PC-9 (cell line): ENCODE measurements at regions of chr3 and their contacts with region 1.

Region 1: DNA sequence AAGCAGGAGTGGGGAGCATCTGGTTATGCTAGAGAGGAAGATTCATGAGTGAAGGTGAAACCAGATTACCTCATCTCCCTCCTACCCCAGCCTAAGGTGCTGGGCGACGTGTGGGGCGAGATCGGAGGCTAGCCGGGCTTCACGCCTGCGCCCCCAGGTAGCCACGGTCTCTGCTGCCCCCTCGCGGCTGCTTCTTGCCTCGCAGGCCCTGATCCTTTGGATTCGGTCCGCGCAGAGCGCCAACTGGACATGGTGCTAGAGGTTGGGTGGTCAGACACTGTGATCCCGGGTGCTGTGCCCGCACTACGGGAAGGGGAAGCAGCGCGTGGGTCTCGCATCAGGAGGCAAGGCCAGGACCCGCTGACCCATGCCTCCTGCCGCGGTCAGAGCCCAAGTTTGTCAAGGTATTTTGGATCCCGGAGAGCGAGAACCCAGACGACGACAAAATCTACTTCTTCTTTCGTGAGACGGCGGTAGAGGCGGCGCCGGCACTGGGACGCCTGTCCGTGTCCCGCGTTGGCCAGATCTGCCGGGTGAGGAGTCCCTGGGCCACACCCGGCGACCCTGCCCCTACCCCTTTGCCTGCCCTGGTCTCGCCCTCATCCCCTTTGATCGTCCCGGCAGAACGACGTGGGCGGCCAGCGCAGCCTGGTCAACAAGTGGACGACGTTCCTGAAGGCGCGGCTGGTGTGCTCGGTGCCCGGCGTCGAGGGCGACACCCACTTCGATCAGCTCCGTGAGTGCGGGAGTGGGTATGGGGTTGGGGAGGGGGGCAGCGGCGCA is 4.2 kb downstream of the SEMA3B start:
- DNase-seq: peak; percentile 61 to 85
- H3K4me3 ChIP-seq: no peak overlapping the region
- H3K27ac ChIP-seq: no peak overlapping the region
- H3K4me1 ChIP-seq: peaks cover 44% of the 10 kb centered on the region
- H3K27me3 ChIP-seq: no peaks in the 10 kb centered on the region
- CTCF ChIP-seq: peak; percentile 91

Region 2: GRCh38 chr3:49500732-49501609 is 772.1 kb before region 1 on chr3:
- CTCF ChIA-PET with region 1: no interaction called
- POLR2A ChIA-PET with region 1: no interaction called
- intact Hi-C with region 1: no loop called
- DNase-seq: peak; percentile 46 to 65
- H3K4me3 ChIP-seq: no peak overlapping the region
- H3K27ac ChIP-seq: peak overlapping the region; percentile 27; the same call in 1 of the 2 replicates
- H3K4me1 ChIP-seq: no peaks in the 10 kb centered on the region
- H3K27me3 ChIP-seq: no peaks in the 10 kb centered on the region
- CTCF ChIP-seq: no peak

Region 3: DNA sequence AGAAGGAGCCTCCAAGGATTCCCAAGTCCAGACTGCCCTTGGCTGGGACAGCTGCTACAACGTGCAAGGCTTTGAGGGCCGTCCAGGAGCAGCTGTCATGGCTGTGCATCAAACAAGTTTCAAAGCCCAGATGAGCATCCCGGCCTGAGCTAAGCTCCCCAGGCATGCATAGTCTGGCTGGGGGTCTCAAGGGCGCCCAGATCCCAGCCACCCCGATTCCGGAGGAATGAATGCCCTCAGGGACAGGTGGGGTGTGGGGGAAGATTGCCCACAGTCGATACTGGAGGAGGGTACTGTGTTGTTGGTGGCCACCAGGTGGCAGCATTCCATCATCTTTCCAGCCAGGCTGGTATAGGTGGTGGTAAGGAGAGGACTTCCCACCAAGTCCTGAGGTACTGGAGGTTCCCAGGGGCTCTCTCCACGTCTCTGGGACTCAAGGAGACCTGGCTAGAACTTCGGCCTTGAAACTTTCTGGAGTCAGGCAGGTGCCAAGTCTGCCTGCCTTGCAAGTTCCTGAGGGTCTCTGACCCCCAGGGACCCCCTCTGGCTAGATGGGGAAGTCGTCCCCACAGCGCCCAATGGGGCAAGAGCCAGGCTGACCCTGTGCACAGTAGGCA is 151.6 kb before region 1 on chr3:
- CTCF ChIA-PET with region 1: no interaction called
- POLR2A ChIA-PET with region 1: no interaction called
- intact Hi-C with region 1: loop called (anchors 5 kb)
- DNase-seq: peak; percentile 63 to 76
- H3K4me3 ChIP-seq: no peak overlapping the region
- H3K27ac ChIP-seq: no peak overlapping the region
- H3K4me1 ChIP-seq: 0 out of 2 replicates have a peak, but pooled peaks cover 4% of the 10 kb centered on the region
- H3K27me3 ChIP-seq: no peaks in the 10 kb centered on the region
- CTCF ChIP-seq: peak; percentile 87

Region 4: DNA sequence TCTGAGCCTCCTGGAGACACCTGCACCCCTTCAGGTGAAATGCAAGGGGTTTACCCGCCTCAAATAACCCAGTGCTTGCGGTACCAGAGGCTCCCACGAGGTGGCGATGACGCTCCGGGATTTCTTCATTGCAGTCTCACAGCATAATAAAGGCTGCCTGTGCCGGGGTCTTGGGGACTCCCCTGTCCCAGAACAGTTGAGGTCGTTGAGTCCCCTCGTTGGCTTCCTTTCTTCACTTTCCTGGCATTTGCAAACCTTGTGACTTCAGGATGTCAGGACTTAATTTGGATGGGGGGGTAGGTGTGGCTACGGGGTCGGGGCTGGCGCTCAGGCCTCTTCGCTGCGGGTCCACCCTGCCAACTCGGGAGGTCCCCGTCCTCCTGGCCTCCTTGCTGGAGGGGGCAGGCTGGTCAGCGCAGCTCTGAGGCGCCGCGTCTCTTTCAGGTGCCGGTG is 80.4 kb before region 1 on chr3:
- CTCF ChIA-PET with region 1: interaction called, 3 read pairs
- POLR2A ChIA-PET with region 1: interaction called, 4 read pairs
- intact Hi-C with region 1: loop called (anchors 1 kb)
- DNase-seq: peak; percentile 47 to 78
- H3K4me3 ChIP-seq: no peak overlapping the region
- H3K27ac ChIP-seq: no peak overlapping the region
- H3K4me1 ChIP-seq: 0 out of 2 replicates have a peak, but pooled peaks cover 7% of the 10 kb centered on the region
- H3K27me3 ChIP-seq: no peaks in the 10 kb centered on the region
- CTCF ChIP-seq: peak; percentile 91

Region 5: GRCh38 chr3:50298836-50299637 is 25.9 kb after region 1 on chr3 and contains the starts of genes HYAL3 and NAA80:
- CTCF ChIA-PET with region 1: interaction called, 4 read pairs
- POLR2A ChIA-PET with region 1: interaction called, 12 read pairs
- intact Hi-C with region 1: no loop called
- DNase-seq: peak; percentile 94 to 99
- H3K4me3 ChIP-seq: peak within 1 kb of the TSS; percentile 95
- H3K27ac ChIP-seq: peak within 1 kb of the TSS; percentile 76
- H3K4me1 ChIP-seq: peaks cover 20% of the 10 kb centered on the region
- H3K27me3 ChIP-seq: no peaks in the 10 kb centered on the region
- CTCF ChIP-seq: no peak
- total RNA-seq, gene HYAL3: 10.2 and 12.2 TPM in 2 replicates
- total RNA-seq, gene NAA80: 25.2 and 25.7 TPM in 2 replicates

Region 6: DNA sequence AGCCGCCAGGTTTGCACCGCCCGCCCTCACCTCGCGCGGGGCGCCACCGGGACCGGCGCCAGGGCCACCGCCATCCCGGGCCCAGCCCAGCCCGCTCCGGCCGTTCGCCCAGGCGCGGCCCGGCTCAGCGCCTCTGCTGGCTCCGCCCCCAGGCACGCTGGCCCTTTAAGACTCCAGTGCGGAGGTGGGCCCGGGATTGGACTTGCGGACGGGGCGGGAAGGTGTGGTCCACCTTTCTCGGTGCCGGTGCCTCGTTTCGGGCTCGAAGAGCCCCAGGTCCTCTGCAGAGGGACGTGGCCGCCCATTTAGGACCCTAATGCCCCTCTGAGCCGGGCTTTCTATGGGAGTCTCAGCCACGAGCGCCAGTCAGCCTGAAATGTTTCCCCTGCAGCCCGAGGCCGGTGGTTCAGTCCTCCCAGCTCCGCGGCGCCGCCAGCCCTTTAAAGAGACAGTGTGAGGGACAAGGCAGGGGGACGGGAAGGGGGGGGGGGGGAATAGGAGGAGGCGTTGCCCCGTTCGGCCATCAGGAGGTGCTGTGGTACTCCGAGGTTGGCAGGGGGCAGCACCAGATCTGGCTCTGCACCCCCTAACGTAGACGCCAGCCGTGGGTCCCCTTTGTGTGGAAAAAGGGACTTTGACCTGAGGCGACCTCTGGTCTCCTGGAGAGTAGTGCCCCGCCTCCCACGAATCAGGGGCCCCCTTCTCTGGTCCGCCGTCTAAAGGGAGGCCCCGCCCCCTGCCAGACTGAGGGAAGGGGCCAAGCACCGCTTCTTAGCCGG is 48.4 kb after region 1 on chr3:
- CTCF ChIA-PET with region 1: interaction called, 7 read pairs
- POLR2A ChIA-PET with region 1: interaction called, 5 read pairs
- intact Hi-C with region 1: loop called (anchors 1 kb)
- DNase-seq: peak; percentile 69 to 89
- H3K4me3 ChIP-seq: peak overlapping the region; percentile 69
- H3K27ac ChIP-seq: peak overlapping the region; percentile 83
- H3K4me1 ChIP-seq: peaks cover 31% of the 10 kb centered on the region
- H3K27me3 ChIP-seq: no peaks in the 10 kb centered on the region
- CTCF ChIP-seq: peak; percentile 62

Region 7: DNA sequence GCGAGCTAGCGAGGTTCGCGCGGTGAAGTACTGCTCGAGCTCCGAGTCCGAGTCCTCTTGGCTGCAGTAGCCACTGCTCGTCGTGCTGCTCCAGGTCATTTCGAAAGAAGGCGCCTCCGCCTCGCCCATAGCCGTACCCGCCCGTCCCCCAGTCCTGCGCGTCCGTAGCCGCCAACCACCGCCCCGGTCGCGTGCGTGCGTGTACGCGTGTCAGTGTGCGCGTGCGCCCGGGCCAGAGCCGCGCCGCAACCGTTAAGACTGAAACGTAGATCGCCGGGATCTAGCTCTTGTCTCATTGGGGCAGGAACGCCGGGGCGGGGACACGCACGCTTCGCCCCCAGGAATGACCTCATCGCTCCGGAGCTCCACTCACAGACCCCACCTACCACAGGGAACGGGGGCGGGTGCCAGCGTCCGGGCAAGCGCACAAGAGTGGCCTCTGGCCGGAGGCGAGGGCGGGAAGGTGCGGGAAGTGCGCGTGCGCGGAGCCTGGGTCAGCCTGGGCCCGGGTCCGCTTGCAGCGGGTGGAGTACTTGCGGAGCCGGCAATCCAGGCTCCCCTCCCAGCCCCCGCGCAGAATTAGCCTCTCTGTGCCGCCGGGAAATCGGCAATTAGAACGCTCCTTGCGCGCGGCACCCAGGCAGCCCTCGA is 64.2 kb after region 1 on chr3:
- CTCF ChIA-PET with region 1: interaction called, 3 read pairs
- POLR2A ChIA-PET with region 1: interaction called, 3 read pairs
- intact Hi-C with region 1: loop called (anchors 5 kb)
- DNase-seq: peak; percentile 92 to 99
- H3K4me3 ChIP-seq: peak overlapping the region; percentile 83
- H3K27ac ChIP-seq: peak overlapping the region; percentile 64
- H3K4me1 ChIP-seq: peaks cover 25% of the 10 kb centered on the region
- H3K27me3 ChIP-seq: no peaks in the 10 kb centered on the region
- CTCF ChIP-seq: no peak